ENCODE measurements at regions of chr16 and their contacts with region 1.

Region 1: GRCh38 chr16:71412270-71413160 is 29.3 kb downstream of the TLE7 start:
- DNase-seq: peak; percentile 49 to 63 (median 56)
- H3K4me3 ChIP-seq: no peak overlapping the region
- H3K4me3 Mint-ChIP-seq: peak overlapping the region in 1 of 8 donors; percentile 20
- H3K27ac ChIP-seq: no peak overlapping the region
- H3K27ac Mint-ChIP-seq: no peak overlapping the region
- H3K4me1 ChIP-seq: peaks cover 11% of the 10 kb centered on the region
- H3K4me1 Mint-ChIP-seq: peaks cover 6 to 19% (median 9%) of the 10 kb centered on the region in 4 donors
- H3K27me3 ChIP-seq: no peaks in the 10 kb centered on the region
- H3K27me3 Mint-ChIP-seq: peaks cover 30 to 38% of the 10 kb centered on the region in 2 donors

Region 2: DNA sequence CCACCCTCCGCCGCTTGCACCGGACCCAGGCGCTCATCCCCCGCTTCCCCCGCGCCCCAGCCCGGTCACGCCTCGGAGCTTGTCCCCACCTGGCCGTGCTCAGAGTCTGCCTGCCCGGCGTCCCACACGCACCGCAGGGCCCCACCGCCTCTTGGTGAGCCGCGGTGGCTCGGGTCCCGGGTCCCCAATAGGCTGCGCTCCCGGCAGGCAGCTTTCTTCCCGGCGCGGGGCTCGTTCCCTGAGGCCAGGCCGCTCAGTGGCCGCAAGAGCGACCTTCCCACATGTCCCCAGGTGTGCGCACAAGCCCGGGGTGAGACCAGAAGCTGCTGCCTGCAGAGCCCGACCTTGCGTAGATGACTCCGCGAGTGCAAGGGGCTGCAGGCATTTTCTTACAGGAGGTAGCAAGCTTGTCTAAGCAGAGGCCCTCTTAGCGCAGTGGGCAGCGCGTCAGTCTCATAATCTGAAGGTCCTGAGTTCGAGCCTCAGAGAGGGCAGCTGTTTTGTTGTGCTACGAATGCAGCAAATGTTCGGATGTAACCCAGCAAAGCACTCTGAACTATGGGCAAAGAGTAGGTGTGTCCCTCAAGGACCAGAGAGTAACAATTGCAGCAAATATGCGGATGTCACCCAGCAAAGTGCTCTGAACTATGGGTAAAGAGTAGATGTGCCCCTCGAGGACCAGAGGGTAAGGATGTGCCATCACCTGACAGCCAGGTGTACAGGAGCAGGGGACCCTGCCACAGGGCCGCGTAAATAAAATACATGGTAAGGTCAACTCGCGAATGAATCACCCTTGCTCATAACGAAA is 13.8 kb after region 1 on chr16:
- CTCF ChIA-PET with region 1: interaction called, 32 read pairs
- POLR2A ChIA-PET with region 1: interaction called, 3 read pairs
- intact Hi-C with region 1: no loop called
- DNase-seq: peak in 3 of 5 donors; percentile 10 to 76 (median 16)
- H3K4me3 ChIP-seq: no peak overlapping the region
- H3K4me3 Mint-ChIP-seq: peak overlapping the region in 3 of 8 donors; percentile 27 to 83 (median 81)
- H3K27ac ChIP-seq: no peak overlapping the region
- H3K27ac Mint-ChIP-seq: peak overlapping the region in 3 of 7 donors; percentile 56 to 90 (median 90)
- H3K4me1 ChIP-seq: peaks cover 4% of the 10 kb centered on the region
- H3K4me1 Mint-ChIP-seq: peaks cover 3 to 10% (median 5%) of the 10 kb centered on the region in 4 donors
- H3K27me3 ChIP-seq: no peaks in the 10 kb centered on the region
- H3K27me3 Mint-ChIP-seq: peaks cover 12 to 34% of the 10 kb centered on the region in 2 donors

Region 3: DNA sequence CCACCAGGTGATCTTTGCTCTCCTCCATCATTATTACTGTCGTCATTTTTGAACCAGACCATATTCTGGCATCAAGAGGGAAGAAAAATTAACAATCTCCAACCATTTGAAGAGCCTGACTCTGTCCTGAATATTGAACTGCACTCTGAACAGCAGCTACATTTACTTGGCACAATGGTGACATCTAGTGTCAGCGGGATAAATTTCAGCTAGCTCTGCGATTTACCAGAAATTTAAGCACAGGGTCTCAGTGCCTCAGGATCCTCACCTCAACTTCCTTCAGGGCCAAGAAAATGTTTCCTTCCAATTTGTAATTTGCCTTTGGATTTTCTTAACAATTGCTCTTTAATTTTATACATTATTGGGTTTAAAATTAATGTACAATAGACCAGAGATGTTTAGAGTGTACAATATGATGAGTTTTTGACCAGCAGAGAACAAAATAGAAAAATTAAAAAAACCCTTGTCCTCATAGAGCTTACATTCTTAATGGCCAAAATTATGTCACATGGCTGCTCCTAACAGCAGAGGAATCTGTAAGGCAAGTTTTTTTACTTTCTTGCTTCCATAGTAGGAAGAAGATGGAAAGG is 87.4 kb after region 1 on chr16:
- CTCF ChIA-PET with region 1: interaction called, 183 read pairs
- POLR2A ChIA-PET with region 1: interaction called, 3 read pairs
- intact Hi-C with region 1: loop called (anchors 1 kb)
- DNase-seq: peak; percentile 50 to 64 (median 56)
- H3K4me3 ChIP-seq: no peak overlapping the region
- H3K4me3 Mint-ChIP-seq: no peak overlapping the region
- H3K27ac ChIP-seq: no peak overlapping the region
- H3K27ac Mint-ChIP-seq: no peak overlapping the region
- H3K4me1 ChIP-seq: no peaks in the 10 kb centered on the region
- H3K4me1 Mint-ChIP-seq: no peaks in the 10 kb centered on the region
- H3K27me3 ChIP-seq: no peaks in the 10 kb centered on the region
- H3K27me3 Mint-ChIP-seq: peaks cover 7 to 11% of the 10 kb centered on the region in 2 donors

Region 4: GRCh38 chr16:71537643-71538042 is 125.1 kb after region 1 on chr16:
- CTCF ChIA-PET with region 1: interaction called, 4 read pairs
- POLR2A ChIA-PET with region 1: no interaction called
- intact Hi-C with region 1: loop called (anchors 1 kb)
- DNase-seq: peak in 4 of 5 donors; percentile 3 to 19 (median 8)
- H3K4me3 ChIP-seq: no peak overlapping the region
- H3K4me3 Mint-ChIP-seq: no peak overlapping the region
- H3K27ac ChIP-seq: no peak overlapping the region
- H3K27ac Mint-ChIP-seq: no peak overlapping the region
- H3K4me1 ChIP-seq: no peaks in the 10 kb centered on the region
- H3K4me1 Mint-ChIP-seq: peaks cover 0 to 4% (median 4%) of the 10 kb centered on the region in 4 donors
- H3K27me3 ChIP-seq: no peaks in the 10 kb centered on the region
- H3K27me3 Mint-ChIP-seq: peaks cover 4 to 6% of the 10 kb centered on the region in 2 donors

Measured in CD4-positive, alpha-beta memory T cell (primary cell).